K562 (cell line): ENCODE measurements at regions of chr21 and their contacts with region 1.

Region 1: GRCh38 chr21:14448784-14449183 is 65.8 kb upstream of the HSPA13 start:
- DNase-seq: no peak
- ATAC-seq: no peak
- H3K4me3 ChIP-seq: no peak overlapping the region
- H3K27ac ChIP-seq: no peak overlapping the region
- H3K4me1 ChIP-seq: peaks cover 13 to 46% of the 10 kb centered on the region in 2 experiments
- H3K27me3 ChIP-seq: no peaks in the 10 kb centered on the region
- CTCF ChIP-seq: no peak
- EP300 ChIP-seq: no peak
- POLR2A ChIP-seq: no peak
- RAD21 ChIP-seq: no peak

Region 2: GRCh38 chr21:14632339-14632738 is 183.6 kb after region 1 on chr21:
- CTCF ChIA-PET with region 1: no interaction called
- POLR2A ChIA-PET with region 1: no interaction called
- in situ Hi-C with region 1: no loop called
- intact Hi-C with region 1: no loop called
- DNase-seq: no peak
- ATAC-seq: no peak
- H3K4me3 ChIP-seq: no peak overlapping the region
- H3K27ac ChIP-seq: no peak overlapping the region
- H3K4me1 ChIP-seq: peaks cover 0 to 8% of the 10 kb centered on the region in 2 experiments; a peak in 2 of 5 replicates
- H3K27me3 ChIP-seq: no peaks in the 10 kb centered on the region
- CTCF ChIP-seq: no peak
- EP300 ChIP-seq: no peak
- POLR2A ChIP-seq: no peak
- RAD21 ChIP-seq: no peak

Region 3: DNA sequence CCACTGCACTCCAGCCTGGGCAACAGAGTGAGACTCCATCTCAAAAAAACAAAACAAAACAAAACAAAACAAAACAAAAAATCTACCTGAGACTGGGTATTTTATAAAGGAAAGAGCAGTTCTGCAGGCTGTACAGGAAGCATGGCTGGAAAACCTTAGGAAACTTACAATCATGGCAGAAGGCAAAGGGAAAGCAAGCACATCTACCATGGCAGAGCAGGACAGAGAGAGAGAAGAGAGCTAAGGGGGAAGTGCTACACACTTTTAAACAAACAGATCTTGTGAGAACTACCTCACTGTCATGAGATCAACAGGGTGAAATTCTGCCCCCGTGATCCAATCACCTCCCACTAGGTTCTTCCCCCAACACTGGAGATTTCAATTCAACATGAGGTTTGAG is 295.6 kb after region 1 on chr21:
- CTCF ChIA-PET with region 1: no interaction called
- POLR2A ChIA-PET with region 1: no interaction called
- in situ Hi-C with region 1: loop called (anchors 5 kb)
- intact Hi-C with region 1: loop called (anchors 5 kb)
- DNase-seq: peak in 1 of 4 experiments; percentile 52
- ATAC-seq: peak; percentile 19
- H3K4me3 ChIP-seq: no peak overlapping the region
- H3K27ac ChIP-seq: peak overlapping the region; percentile 55
- H3K4me1 ChIP-seq: peaks cover 13 to 40% of the 10 kb centered on the region in 2 experiments
- H3K27me3 ChIP-seq: no peaks in the 10 kb centered on the region
- CTCF ChIP-seq: no peak
- EP300 ChIP-seq: no peak
- POLR2A ChIP-seq: no peak
- RAD21 ChIP-seq: no peak